ENCODE measurements at regions of chr5 and their contacts with region 1.

Region 1: DNA sequence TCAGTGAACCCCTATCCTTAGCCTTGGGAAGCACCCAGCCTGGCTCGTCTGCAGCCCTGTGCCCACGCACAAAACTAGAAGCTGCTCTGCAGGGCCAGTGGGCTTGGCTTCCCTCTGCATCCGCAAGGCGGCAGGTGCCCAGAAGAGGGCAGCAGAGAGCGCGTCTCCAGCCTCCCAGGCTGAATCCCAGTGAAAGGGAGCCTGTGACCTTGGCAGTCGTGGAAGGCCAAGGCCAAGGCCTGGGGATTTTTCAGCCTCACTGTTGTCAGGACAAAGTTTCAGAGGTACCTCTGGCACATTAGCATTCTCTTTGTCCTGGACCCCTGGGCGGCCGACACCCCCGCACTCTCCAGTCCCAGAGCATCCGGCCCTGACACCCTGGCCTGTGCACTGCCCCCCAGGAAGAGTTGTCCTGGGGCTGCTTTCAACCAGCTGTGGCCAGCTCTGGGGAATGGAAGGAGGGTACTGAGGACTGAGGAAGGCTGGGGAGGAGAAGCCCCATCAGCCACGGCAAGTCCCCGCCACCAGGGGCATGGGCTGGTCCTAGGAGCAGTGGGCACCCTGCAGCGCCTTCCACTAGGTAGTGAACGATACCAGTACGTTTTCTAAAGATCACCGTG is 63.6 kb upstream of the IL17B start:
- DNase-seq: peak; percentile 95
- ATAC-seq: peak; percentile 51
- H3K4me3 ChIP-seq: no peak overlapping the region
- H3K27ac ChIP-seq: peak overlapping the region; percentile 28
- H3K4me1 ChIP-seq: peaks cover 49% of the 10 kb centered on the region
- H3K27me3 ChIP-seq: no peaks in the 10 kb centered on the region
- CTCF ChIP-seq: peak; percentile 99

Region 2: DNA sequence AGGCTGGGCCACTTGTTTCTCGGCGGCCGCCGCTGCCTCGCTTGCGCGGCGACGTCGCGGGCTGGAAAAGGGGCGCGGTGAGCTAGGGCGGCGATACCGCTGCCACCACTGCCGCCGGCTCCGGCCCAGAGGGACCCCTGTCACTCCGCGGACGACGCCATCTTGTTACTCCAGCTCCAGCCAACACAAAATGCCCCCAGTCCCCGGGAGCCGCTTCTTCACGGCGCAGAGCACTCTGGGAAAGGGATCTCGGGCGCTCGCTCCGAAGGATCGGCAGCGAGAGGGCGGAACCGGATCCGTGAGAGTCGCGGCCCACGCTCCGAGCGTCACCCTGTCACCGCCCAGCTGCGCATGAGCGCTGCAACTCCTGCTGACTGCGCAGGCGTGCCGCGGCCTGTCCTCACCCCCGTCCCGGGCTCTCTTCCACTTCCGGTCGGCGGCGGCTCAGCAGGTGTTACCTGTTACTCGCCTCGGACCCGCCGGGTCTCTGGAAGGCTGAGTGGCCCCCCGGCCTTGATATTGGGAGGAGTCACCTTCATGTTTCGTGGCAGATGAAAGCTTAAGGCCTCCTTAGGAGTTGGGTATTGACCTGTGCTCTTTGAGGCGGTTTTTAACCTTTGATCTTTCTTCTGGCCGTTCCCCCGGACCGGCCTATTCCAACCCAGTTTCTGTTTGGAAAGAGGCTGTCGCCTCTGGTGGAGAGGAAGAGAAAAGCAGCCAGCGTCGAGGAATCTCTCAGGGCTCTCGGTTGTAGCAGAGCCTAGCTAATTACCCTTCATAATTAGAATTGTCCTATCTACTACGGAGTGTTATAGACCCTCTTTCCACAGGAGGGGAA is 108.7 kb after region 1 on chr5 and contains the start of gene CSNK1A1:
- CTCF ChIA-PET with region 1: interaction called, 6 read pairs
- POLR2A ChIA-PET with region 1: interaction called, 9 read pairs
- intact Hi-C with region 1: loop called (anchors 1 kb)
- DNase-seq: peak; percentile 100
- ATAC-seq: peak; percentile 89
- H3K4me3 ChIP-seq: peak within 1 kb of the TSS; percentile 93
- H3K27ac ChIP-seq: peak within 1 kb of the TSS; percentile 85
- H3K4me1 ChIP-seq: peaks cover 36% of the 10 kb centered on the region
- H3K27me3 ChIP-seq: no peaks in the 10 kb centered on the region
- CTCF ChIP-seq: peak; percentile 98
- total RNA-seq, gene CSNK1A1: 500 and 586 TPM in 2 replicates

Region 3: GRCh38 chr5:149666212-149666852 is 223.7 kb after region 1 on chr5:
- CTCF ChIA-PET with region 1: no interaction called
- POLR2A ChIA-PET with region 1: no interaction called
- intact Hi-C with region 1: no loop called
- DNase-seq: peak; percentile 47
- ATAC-seq: peak; percentile 54
- H3K4me3 ChIP-seq: no peak overlapping the region
- H3K27ac ChIP-seq: no peak overlapping the region
- H3K4me1 ChIP-seq: no peaks in the 10 kb centered on the region
- H3K27me3 ChIP-seq: no peaks in the 10 kb centered on the region
- CTCF ChIP-seq: no peak

Measured in PC-3 (cell line).